Activated CD4-positive, alpha-beta T cell treated with anti-CD3 and anti-CD28 coated beads, Interleukin-2, amount 10 ng/mL, durations not matched to agents 24 days and 14 days (primary cell): ENCODE measurements at regions of chr2 and their contacts with region 1.

Region 1: GRCh38 chr2:179031731-179032408 is 18.1 kb downstream of the CCDC141 start:
- DNase-seq: peak; percentile 82
- H3K4me3 Mint-ChIP-seq: peak overlapping the region; percentile 85
- H3K27ac Mint-ChIP-seq: peak overlapping the region; percentile 97
- H3K4me1 Mint-ChIP-seq: peaks cover 24% of the 10 kb centered on the region
- H3K27me3 Mint-ChIP-seq: no peaks in the 10 kb centered on the region

Region 2: GRCh38 chr2:178796079-178796677 is 235.7 kb before region 1 on chr2:
- intact Hi-C with region 1: loop called (anchors 5 kb)
- DNase-seq: no peak
- H3K4me3 Mint-ChIP-seq: no peak overlapping the region
- H3K27ac Mint-ChIP-seq: no peak overlapping the region
- H3K4me1 Mint-ChIP-seq: no peaks in the 10 kb centered on the region
- H3K27me3 Mint-ChIP-seq: no peaks in the 10 kb centered on the region

Region 3: DNA sequence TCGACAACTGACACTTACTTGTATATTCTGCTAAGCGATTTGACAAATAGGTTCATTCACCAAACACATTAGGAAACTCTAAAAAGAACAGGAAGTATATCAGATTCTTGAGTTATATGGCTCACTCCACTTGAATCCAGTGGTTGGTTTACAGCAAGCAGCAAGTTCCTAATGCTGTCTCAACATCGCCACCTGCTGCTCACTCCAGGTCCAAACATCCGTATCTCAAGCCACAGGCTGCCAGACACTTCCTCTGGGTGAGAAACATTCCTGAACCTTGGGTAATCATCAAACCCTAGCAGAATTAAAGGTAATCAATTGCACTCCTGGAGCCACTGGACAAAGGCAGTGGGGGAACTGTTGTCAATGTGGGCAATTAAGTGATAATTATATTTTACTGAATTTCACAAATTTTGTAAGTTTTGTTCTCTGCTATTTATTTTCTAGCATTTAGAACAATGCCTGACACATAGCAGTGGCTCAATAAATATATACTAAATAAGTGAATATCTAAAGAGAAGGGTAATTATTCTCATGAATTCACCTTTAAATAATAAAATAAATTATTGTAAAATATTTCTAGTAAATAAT is 117.5 kb before region 1 on chr2:
- intact Hi-C with region 1: loop called (anchors 5 kb)
- DNase-seq: peak; percentile 91
- H3K4me3 Mint-ChIP-seq: no peak overlapping the region
- H3K27ac Mint-ChIP-seq: no peak overlapping the region
- H3K4me1 Mint-ChIP-seq: peaks cover 10% of the 10 kb centered on the region
- H3K27me3 Mint-ChIP-seq: no peaks in the 10 kb centered on the region

Region 4: GRCh38 chr2:179106676-179107428 is 75.0 kb after region 1 on chr2:
- intact Hi-C with region 1: loop called (anchors 1 kb)
- DNase-seq: no peak
- H3K4me3 Mint-ChIP-seq: peak overlapping the region; percentile 38
- H3K27ac Mint-ChIP-seq: peak overlapping the region; percentile 46
- H3K4me1 Mint-ChIP-seq: peaks cover 29% of the 10 kb centered on the region
- H3K27me3 Mint-ChIP-seq: no peaks in the 10 kb centered on the region